AG04450 (cell line): ENCODE measurements at regions of chr3 and their contacts with region 1.

Region 1: GRCh38 chr3:194592798-194593752 is 40.1 kb downstream of the TMEM44 start:
- DNase-seq: peak; percentile 99
- H3K4me3 ChIP-seq: no peak overlapping the region
- H3K27ac ChIP-seq: peak overlapping the region; percentile 71
- H3K27me3 ChIP-seq: no peaks in the 10 kb centered on the region
- CTCF ChIP-seq: no peak

Region 2: DNA sequence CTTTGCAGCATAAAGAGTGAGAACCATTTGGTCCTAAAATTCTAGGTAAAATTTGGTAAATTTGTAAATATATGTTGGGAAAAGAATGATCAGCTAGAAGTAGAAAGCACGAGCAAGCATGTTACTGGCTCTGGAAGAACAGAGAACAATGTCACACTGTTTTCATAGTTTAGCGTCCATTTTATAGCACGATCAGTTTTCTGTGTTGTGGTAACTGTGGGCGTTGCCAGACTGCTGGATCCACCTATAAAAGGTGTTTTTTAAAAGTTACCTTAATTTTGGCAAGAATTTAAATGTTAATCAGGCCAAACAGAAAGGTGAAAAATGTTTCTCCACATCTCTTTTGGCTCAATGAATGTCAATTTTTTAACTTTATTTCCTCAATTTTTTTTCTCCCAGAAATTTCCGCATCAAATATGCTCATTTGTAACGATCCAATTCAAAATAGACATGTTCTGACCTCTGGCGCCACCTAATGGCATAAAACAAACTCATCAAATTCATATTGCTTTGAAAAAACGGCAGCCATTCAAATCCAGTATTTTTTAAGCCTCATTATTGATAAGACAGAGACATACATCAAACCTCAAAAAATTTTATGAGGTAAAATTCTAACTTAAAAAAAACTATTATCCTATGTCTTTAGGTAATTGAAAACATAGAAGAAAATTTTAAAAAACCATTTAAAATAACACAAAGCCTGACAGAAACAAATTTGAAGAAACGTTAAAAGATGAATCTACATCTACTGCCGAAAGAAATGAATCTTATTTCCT is 188.5 kb before region 1 on chr3:
- CTCF ChIA-PET with region 1: interaction called, 10 read pairs
- POLR2A ChIA-PET with region 1: interaction called, 4 read pairs
- DNase-seq: no peak
- H3K4me3 ChIP-seq: no peak overlapping the region
- H3K27ac ChIP-seq: no peak overlapping the region
- H3K27me3 ChIP-seq: no peaks in the 10 kb centered on the region
- CTCF ChIP-seq: peak; percentile 66

Region 3: GRCh38 chr3:194486540-194487288 is 106.4 kb before region 1 on chr3 and contains the start of gene ATP13A3:
- CTCF ChIA-PET with region 1: interaction called, 22 read pairs
- POLR2A ChIA-PET with region 1: interaction called, 6 read pairs
- DNase-seq: peak; percentile 77
- H3K4me3 ChIP-seq: peak within 1 kb of the TSS; percentile 79
- H3K27ac ChIP-seq: peak within 1 kb of the TSS; percentile 89
- H3K27me3 ChIP-seq: no peaks in the 10 kb centered on the region
- CTCF ChIP-seq: no peak
- polyA plus RNA-seq, gene ATP13A3: 98.5 and 132 TPM in 2 replicates

Region 4: DNA sequence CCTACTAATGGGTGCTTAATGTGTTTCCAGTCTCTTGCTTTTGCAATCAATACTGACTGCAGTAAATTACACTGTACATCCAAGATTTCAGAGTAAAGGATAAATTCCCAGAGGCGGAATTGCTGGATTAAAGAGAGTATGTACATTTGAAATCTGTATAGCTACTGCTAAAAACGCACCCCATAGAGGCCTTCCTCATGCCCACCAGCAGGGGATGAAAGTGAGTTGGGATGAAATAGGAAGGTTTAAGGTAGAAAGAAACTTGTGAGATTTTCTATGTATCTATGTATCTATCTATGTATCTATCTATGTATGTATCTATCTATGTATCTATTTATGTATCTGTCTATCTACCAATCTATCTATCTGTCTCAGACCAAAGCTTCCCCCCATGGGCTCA is 11.8 kb after region 1 on chr3:
- CTCF ChIA-PET with region 1: interaction called, 12 read pairs
- POLR2A ChIA-PET with region 1: no interaction called
- DNase-seq: no peak
- H3K4me3 ChIP-seq: no peak overlapping the region
- H3K27ac ChIP-seq: no peak overlapping the region
- H3K27me3 ChIP-seq: no peaks in the 10 kb centered on the region
- CTCF ChIP-seq: peak; percentile 48